Right cardiac atrium (tissue), 5 donors: ENCODE measurements at regions of chr11 and their contacts with region 1.

Region 1: GRCh38 chr11:8018484-8019313 is 31.6 kb downstream of the EIF3F start:
- DNase-seq: peak; percentile 83 to 93 (median 88)
- ATAC-seq: peak; percentile 83 to 87
- H3K4me3 ChIP-seq: peak overlapping the region; percentile 71
- H3K27ac ChIP-seq: peak overlapping the region; percentile 62
- H3K4me1 ChIP-seq: peaks cover 3% of the 10 kb centered on the region
- H3K27me3 ChIP-seq: no peaks in the 10 kb centered on the region

Region 2: DNA sequence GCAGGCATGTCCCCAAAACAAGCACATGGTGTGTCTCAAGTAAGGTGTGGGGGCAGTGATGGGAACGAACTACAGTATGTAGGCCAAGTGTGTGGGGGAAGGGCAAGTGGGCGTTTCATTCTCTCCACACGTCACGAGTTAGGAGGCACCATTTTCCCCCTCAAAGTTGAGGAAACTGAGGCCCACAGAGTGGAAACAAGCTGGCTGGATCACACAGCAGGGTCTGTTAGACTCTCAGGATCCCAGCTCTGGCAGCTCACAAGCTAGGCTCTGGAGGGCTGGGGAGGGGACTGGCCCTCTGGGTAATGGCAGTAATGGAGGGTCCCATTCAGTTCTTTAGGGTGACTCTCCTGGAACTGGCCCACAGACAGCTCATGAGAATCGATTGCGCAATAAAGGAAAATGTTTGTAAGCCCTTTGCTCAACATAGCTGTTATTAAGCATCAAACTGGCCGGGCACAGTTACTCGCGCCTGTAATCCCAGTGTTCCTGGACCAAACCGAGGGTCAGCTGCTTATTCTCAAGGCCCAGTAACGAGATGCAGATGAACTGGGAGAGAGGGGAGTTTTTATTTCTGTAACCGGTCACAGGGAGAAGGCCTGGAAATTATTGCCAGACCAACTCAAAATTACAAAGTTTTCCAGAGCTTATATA is 38.2 kb after region 1 on chr11:
- intact Hi-C with region 1: no loop called
- DNase-seq: peak; percentile 66 to 87 (median 74)
- ATAC-seq: peak; percentile 78 to 79
- H3K4me3 ChIP-seq: no peak overlapping the region
- H3K27ac ChIP-seq: peak overlapping the region; percentile 1
- H3K4me1 ChIP-seq: peaks cover 4% of the 10 kb centered on the region
- H3K27me3 ChIP-seq: no peaks in the 10 kb centered on the region

Region 3: GRCh38 chr11:8080674-8081590 is 62.2 kb after region 1 on chr11 and contains the start of gene TUB:
- intact Hi-C with region 1: loop called in 1 of 4 experiments (anchors 5 kb)
- DNase-seq: peak; percentile 54 to 76 (median 71)
- ATAC-seq: peak; percentile 56 to 69
- H3K4me3 ChIP-seq: peak within 1 kb of the TSS; percentile 64
- H3K27ac ChIP-seq: no peak within 1 kb of the TSS
- H3K4me1 ChIP-seq: peaks cover 18% of the 10 kb centered on the region
- H3K27me3 ChIP-seq: no peaks in the 10 kb centered on the region
- total RNA-seq, gene TUB: 24.8 to 31.2 (median 28.0) TPM